Esophagus muscularis mucosa (tissue), 4 donors: ENCODE measurements at regions of chr5 and their contacts with region 1.

Region 1: DNA sequence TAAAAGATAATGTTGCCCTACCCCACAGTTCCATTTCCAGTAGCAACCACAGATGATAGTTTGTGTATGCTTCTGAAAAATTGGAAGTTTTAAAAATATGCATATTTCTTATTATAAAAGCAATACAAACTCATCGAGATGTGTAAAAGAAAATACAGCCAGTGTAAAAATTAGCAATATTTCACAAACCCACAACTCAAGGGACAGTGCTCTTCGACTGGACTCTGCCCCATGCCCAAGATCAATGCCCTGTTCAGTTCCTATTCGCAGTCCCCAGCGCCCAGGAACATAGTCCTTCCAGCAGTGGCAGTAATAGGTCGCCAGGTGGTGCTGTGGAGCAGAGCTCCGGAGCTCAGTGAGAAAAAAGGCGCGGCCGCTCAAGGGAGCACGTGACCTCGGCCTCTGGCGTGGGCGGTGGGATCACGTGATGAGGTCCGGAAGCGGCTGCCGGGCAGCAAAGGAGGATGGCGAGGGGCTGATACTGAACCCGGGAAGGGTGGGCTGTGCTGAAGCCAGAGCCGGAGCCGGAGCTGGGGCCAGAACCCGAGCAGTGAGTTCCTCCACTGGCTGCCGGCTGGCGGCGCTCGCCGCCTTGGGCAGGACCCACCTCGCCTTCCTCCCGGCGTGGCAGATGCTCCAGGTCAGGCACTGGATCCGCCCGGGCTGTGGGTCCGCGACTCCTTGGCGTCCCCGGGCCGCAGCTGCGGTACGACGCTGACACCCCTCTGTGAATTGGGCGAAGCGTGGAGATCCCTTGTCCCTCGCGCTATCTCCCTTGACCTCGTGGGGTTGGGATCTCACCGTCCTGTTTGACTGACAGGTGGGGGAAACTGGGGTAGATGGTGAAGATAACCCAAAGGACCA is at the start of gene SLC36A1:
- DNase-seq: peak; percentile 99
- H3K4me3 ChIP-seq: peak within 1 kb of the TSS; percentile 73 to 87 (median 80)
- H3K27ac ChIP-seq: peak within 1 kb of the TSS; percentile 64 to 81 (median 78)
- H3K4me1 ChIP-seq: peaks cover 10 to 22% (median 17%) of the 10 kb centered on the region in 4 donors
- H3K27me3 ChIP-seq: no peaks in the 10 kb centered on the region
- CTCF ChIP-seq: peak; percentile 98 to 99 (median 98)
- EP300 ChIP-seq: no peak
- POLR2A ChIP-seq: peak; percentile 49
- total RNA-seq, gene SLC36A1: 5.1 to 13.7 (median 8.8) TPM

Region 2: GRCh38 chr5:151288180-151288579 is 159.2 kb before region 1 on chr5:
- intact Hi-C with region 1: no loop called
- DNase-seq: no peak
- H3K4me3 ChIP-seq: no peak overlapping the region
- H3K27ac ChIP-seq: no peak overlapping the region
- H3K4me1 ChIP-seq: no peaks in the 10 kb centered on the region
- H3K27me3 ChIP-seq: no peaks in the 10 kb centered on the region
- CTCF ChIP-seq: no peak
- EP300 ChIP-seq: no peak
- POLR2A ChIP-seq: no peak

Region 3: GRCh38 chr5:151499501-151500035 is 52.2 kb after region 1 on chr5:
- intact Hi-C with region 1: loop called (anchors 1 kb)
- DNase-seq: no peak
- H3K4me3 ChIP-seq: no peak overlapping the region
- H3K27ac ChIP-seq: no peak overlapping the region
- H3K4me1 ChIP-seq: peaks cover 0 to 8% (median 3%) of the 10 kb centered on the region in 4 donors
- H3K27me3 ChIP-seq: no peaks in the 10 kb centered on the region
- CTCF ChIP-seq: no peak
- EP300 ChIP-seq: no peak
- POLR2A ChIP-seq: no peak

Region 4: GRCh38 chr5:151651997-151652645 is 204.7 kb after region 1 on chr5:
- intact Hi-C with region 1: loop called (anchors 2 kb)
- DNase-seq: no peak
- H3K4me3 ChIP-seq: no peak overlapping the region
- H3K27ac ChIP-seq: no peak overlapping the region
- H3K4me1 ChIP-seq: no peaks in the 10 kb centered on the region
- H3K27me3 ChIP-seq: no peaks in the 10 kb centered on the region
- CTCF ChIP-seq: peak; percentile 78 to 88 (median 80)
- EP300 ChIP-seq: no peak
- POLR2A ChIP-seq: no peak

Region 5: GRCh38 chr5:151740336-151740942 is 293.0 kb after region 1 on chr5:
- intact Hi-C with region 1: loop called (anchors 2 kb)
- DNase-seq: no peak
- H3K4me3 ChIP-seq: peak overlapping the region in 3 of 4 donors; percentile 22 to 31 (median 25)
- H3K27ac ChIP-seq: peak overlapping the region; percentile 75 to 79 (median 78)
- H3K4me1 ChIP-seq: peaks cover 31 to 52% (median 45%) of the 10 kb centered on the region in 4 donors
- H3K27me3 ChIP-seq: no peaks in the 10 kb centered on the region
- CTCF ChIP-seq: peak; percentile 88 to 97 (median 97)
- EP300 ChIP-seq: no peak
- POLR2A ChIP-seq: no peak

Region 6: DNA sequence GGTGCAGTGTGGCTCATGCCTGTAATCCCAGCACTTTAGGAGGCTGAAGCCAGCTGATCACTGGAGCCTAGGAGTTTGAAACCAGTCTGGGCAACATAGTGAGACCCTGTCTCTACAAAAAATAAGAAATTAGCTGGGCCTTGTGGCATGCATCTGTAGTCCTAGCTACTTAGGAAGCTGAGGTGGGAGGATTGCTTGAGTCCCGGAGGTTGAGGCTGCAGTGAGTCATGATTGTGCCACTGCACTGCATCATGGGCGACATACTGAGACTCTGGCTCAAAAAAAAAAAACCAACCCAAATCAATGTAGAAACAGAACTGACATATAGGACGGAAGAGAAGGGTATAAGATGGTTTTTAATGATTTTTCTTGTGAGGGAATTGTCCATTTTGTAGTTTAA is 352.0 kb after region 1 on chr5:
- intact Hi-C with region 1: no loop called
- DNase-seq: no peak
- H3K4me3 ChIP-seq: no peak overlapping the region
- H3K27ac ChIP-seq: no peak overlapping the region
- H3K4me1 ChIP-seq: peaks cover 0 to 3% (median 0%) of the 10 kb centered on the region in 4 donors
- H3K27me3 ChIP-seq: no peaks in the 10 kb centered on the region
- CTCF ChIP-seq: no peak
- EP300 ChIP-seq: no peak
- POLR2A ChIP-seq: no peak